ENCODE measurements at regions of chr5 and their contacts with region 1.

Region 1: GRCh38 chr5:31232273-31232888 is 38.9 kb downstream of the CDH6 start:
- DNase-seq: peak; percentile 7
- ATAC-seq: peak; percentile 39
- H3K4me3 Mint-ChIP-seq: no peak overlapping the region
- H3K27ac Mint-ChIP-seq: no peak overlapping the region
- H3K4me1 Mint-ChIP-seq: no peaks in the 10 kb centered on the region
- H3K27me3 Mint-ChIP-seq: peaks cover 13% of the 10 kb centered on the region

Region 2: DNA sequence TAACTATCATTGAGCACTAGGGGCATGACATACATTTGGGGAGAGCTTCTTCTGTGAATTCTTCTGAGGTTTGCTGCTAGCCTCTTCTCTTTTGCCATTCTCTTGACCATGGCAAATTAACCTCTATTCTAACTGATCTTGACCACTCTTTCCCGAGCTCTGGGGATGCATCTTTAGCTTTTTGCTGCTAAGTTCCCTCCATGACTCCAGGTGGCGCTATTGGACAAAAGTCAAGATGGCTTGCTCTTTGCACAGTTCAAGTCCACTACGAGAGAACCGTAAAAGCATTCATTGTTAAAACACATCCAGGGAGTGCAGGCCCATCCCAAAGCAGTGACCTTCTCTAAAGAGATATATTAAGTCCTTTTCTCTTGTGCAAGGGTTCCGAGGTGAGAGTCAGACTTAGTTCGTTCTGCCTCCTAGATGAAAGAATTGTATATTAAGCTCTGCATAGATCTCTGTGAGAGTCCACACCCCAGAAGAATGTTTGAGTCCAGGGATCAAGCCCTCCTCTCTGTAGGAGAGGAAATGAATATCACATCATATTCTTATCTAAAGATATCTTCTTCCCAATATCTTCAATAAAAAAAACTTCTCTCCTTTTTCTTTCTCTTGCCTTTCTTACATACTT is 1191.8 kb before region 1 on chr5:
- CTCF ChIA-PET with region 1: interaction called, 3 read pairs
- POLR2A ChIA-PET with region 1: no interaction called
- intact Hi-C with region 1: loop called in 1 of 2 experiments (anchors 1 kb)
- DNase-seq: peak; percentile 37
- ATAC-seq: no peak
- H3K4me3 Mint-ChIP-seq: no peak overlapping the region
- H3K27ac Mint-ChIP-seq: no peak overlapping the region
- H3K4me1 Mint-ChIP-seq: no peaks in the 10 kb centered on the region
- H3K27me3 Mint-ChIP-seq: no peaks in the 10 kb centered on the region

Region 3: GRCh38 chr5:30401479-30402058 is 830.8 kb before region 1 on chr5:
- CTCF ChIA-PET with region 1: no interaction called
- POLR2A ChIA-PET with region 1: no interaction called
- intact Hi-C with region 1: loop called in 1 of 2 experiments (anchors 5 kb)
- DNase-seq: peak; percentile 15
- ATAC-seq: no peak
- H3K4me3 Mint-ChIP-seq: no peak overlapping the region
- H3K27ac Mint-ChIP-seq: no peak overlapping the region
- H3K4me1 Mint-ChIP-seq: no peaks in the 10 kb centered on the region
- H3K27me3 Mint-ChIP-seq: no peaks in the 10 kb centered on the region